ENCODE measurements at regions of chr22 and their contacts with region 1.

Region 1: GRCh38 chr22:38454353-38455075 is 485 bp downstream of the KCNJ4 start:
- DNase-seq: no peak
- ATAC-seq: no peak
- H3K4me3 ChIP-seq: peak overlapping the region; percentile 19 to 38
- H3K27ac ChIP-seq: no peak overlapping the region
- H3K4me1 ChIP-seq: no peaks in the 10 kb centered on the region
- H3K27me3 ChIP-seq: no peaks in the 10 kb centered on the region

Region 2: GRCh38 chr22:38124236-38124974 is 330.1 kb before region 1 on chr22:
- intact Hi-C with region 1: no loop called
- DNase-seq: no peak
- ATAC-seq: no peak
- H3K4me3 ChIP-seq: no peak overlapping the region
- H3K27ac ChIP-seq: no peak overlapping the region
- H3K4me1 ChIP-seq: no peaks in the 10 kb centered on the region
- H3K27me3 ChIP-seq: no peaks in the 10 kb centered on the region

Region 3: DNA sequence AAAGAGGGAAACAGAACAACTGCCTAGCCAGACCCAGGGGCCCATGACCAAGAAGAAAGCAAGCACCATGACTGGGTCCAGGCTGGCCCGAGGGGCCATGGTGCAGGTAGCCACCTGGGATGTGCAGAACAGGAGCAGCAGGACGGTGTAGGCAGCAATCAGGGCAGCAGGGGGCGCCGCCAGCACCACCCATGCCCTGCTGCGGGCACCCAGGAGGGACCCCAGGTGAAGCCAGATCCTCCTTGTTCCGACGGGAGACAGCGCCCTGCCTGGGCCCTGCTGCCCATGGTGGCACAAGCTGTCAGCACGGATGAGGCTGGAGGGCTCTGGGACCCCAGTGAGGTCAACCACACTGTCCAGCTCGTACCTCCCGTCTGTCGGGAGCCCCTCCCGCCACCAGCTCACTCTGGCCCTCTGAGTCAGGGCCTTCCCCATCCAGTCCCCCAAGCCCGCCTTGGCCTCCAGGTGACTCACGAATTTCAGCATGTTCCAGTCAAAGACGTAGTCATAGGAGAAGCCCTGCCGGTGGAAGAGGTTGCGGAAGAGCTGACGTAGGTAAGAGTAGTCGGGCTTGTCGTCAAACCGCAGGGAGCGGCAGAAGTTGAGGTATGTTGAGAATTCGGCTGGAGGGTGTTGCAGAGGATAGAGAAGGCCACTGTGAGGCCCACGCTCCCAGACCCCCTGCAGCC is 156.1 kb before region 1 on chr22:
- intact Hi-C with region 1: no loop called
- DNase-seq: no peak
- ATAC-seq: no peak
- H3K4me3 ChIP-seq: no peak overlapping the region
- H3K27ac ChIP-seq: no peak overlapping the region
- H3K4me1 ChIP-seq: no peaks in the 10 kb centered on the region
- H3K27me3 ChIP-seq: no peaks in the 10 kb centered on the region

Region 4: DNA sequence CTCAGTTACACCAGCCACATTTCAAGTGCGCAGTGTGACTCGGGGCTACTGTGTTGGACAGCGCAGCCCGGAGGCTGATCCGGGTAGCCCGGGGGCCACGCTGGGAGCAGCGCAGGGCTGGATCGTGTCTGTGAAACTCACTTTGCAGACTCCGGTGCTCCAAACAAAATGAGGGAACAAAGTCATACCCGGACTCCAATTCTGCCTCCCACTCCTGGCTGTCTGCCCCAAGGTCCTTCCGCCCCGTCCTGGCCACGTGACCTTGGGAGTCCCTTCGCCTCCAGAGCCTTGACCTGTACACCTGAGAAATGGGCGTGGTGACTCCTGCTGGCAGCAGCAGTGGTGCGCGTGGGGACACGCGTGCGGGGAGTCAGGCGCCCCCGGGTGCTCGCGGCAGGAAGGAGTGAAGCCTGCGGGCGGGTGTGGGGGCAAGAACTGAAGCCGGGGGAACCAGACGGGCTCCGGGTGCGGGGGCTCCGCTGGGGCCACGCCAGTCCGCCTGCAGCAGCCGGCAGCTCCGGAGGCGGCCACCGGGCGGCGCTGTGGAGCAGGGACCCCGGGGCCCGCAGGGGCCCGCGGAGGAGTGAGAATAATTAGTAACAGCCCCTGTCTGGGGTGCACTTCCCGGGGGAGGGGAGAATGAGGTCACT is 42.0 kb before region 1 on chr22:
- intact Hi-C with region 1: loop called in 1 of 2 experiments (anchors 5 kb)
- DNase-seq: peak in 1 of 2 donors; percentile 77
- ATAC-seq: peak; percentile 61
- H3K4me3 ChIP-seq: no peak overlapping the region
- H3K27ac ChIP-seq: no peak overlapping the region
- H3K4me1 ChIP-seq: no peaks in the 10 kb centered on the region
- H3K27me3 ChIP-seq: no peaks in the 10 kb centered on the region